MCF 10A (cell line): ENCODE measurements at regions of chr6 and their contacts with region 1.

Region 1: DNA sequence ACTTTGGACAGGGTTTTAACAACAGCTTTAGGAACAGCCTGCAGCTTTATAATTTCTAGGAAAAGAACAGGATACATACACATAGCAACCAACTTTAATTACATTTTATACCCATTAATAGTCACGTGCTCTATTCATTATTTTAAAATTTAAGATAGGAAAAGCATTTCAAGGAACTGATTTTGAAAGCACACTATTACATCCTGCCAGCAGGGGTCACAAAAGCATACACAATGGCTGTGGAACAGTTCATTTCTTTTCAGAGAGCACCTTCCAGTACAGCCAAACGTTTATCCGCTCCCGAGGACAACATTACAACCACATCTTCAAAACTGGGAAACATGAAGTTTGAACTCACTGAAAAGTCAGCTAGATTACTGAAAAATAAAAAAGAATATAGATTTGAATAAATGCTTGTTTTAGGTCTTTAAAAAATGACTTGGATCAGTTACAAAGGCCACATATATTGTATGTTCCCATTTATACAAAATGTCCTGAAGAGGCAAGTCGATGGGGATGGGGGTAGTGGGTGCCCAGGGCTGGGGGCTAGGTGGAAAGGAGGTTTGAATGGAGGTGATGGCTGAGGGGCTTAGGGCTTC is 104.6 kb upstream of the EXOC2 start:
- DNase-seq: peak; percentile 68
- H3K4me3 Mint-ChIP-seq: no peak overlapping the region
- H3K27ac Mint-ChIP-seq: no peak overlapping the region
- H3K4me1 Mint-ChIP-seq: no peaks in the 10 kb centered on the region
- H3K27me3 Mint-ChIP-seq: peaks cover 40% of the 10 kb centered on the region
- CTCF ChIP-seq: peak; percentile 83

Region 2: GRCh38 chr6:431504-431903 is 366.1 kb before region 1 on chr6:
- CTCF ChIA-PET with region 1: no interaction called
- POLR2A ChIA-PET with region 1: no interaction called
- intact Hi-C with region 1: no loop called
- DNase-seq: no peak
- H3K4me3 Mint-ChIP-seq: no peak overlapping the region
- H3K27ac Mint-ChIP-seq: no peak overlapping the region
- H3K4me1 Mint-ChIP-seq: no peaks in the 10 kb centered on the region
- H3K27me3 Mint-ChIP-seq: no peaks in the 10 kb centered on the region
- CTCF ChIP-seq: no peak

Region 3: DNA sequence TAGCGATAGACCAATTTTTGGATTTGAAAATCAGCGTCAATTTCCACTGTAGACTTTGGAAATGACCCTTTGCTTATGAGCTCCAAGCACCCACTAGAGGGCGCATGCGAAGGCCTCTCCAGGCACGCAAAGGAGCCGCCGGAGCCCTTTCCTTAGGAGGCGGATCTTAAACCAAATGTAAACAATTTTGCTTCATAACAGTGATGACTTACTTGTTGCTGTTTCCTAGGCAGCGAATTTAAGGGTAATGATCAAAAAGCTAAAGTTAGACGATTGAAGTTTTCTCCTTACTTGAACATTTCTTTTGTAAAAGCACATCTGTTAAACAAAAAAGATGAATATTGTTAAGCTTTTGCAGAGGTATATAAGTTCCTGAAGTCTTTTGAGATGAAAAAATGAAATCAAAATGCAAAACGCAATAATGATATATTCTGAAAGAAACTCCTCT is 75.5 kb before region 1 on chr6:
- CTCF ChIA-PET with region 1: interaction called, 5 read pairs
- POLR2A ChIA-PET with region 1: no interaction called
- intact Hi-C with region 1: loop called (anchors 10 kb)
- DNase-seq: peak; percentile 87
- H3K4me3 Mint-ChIP-seq: no peak overlapping the region
- H3K27ac Mint-ChIP-seq: no peak overlapping the region
- H3K4me1 Mint-ChIP-seq: no peaks in the 10 kb centered on the region
- H3K27me3 Mint-ChIP-seq: peaks cover 12% of the 10 kb centered on the region
- CTCF ChIP-seq: peak; percentile 74

Region 4: GRCh38 chr6:894274-894673 is 96.7 kb after region 1 on chr6:
- CTCF ChIA-PET with region 1: interaction called, 5 read pairs
- POLR2A ChIA-PET with region 1: no interaction called
- intact Hi-C with region 1: loop called (anchors 5 kb)
- DNase-seq: peak; percentile 13
- H3K4me3 Mint-ChIP-seq: no peak overlapping the region
- H3K27ac Mint-ChIP-seq: no peak overlapping the region
- H3K4me1 Mint-ChIP-seq: no peaks in the 10 kb centered on the region
- H3K27me3 Mint-ChIP-seq: peaks cover 11% of the 10 kb centered on the region
- CTCF ChIP-seq: peak; percentile 18

Region 5: GRCh38 chr6:912871-913835 is 115.6 kb after region 1 on chr6:
- CTCF ChIA-PET with region 1: interaction called, 10 read pairs
- POLR2A ChIA-PET with region 1: interaction called, 6 read pairs
- intact Hi-C with region 1: loop called (anchors 2 kb)
- DNase-seq: peak; percentile 48
- H3K4me3 Mint-ChIP-seq: no peak overlapping the region
- H3K27ac Mint-ChIP-seq: no peak overlapping the region
- H3K4me1 Mint-ChIP-seq: no peaks in the 10 kb centered on the region
- H3K27me3 Mint-ChIP-seq: peaks cover 12% of the 10 kb centered on the region
- CTCF ChIP-seq: peak; percentile 77

Region 6: GRCh38 chr6:1381481-1382330 is 584.1 kb after region 1 on chr6:
- CTCF ChIA-PET with region 1: interaction called, 9 read pairs
- POLR2A ChIA-PET with region 1: interaction called, 3 read pairs
- intact Hi-C with region 1: loop called (anchors 1 kb)
- DNase-seq: peak; percentile 50
- H3K4me3 Mint-ChIP-seq: peak overlapping the region; percentile 18
- H3K27ac Mint-ChIP-seq: no peak overlapping the region
- H3K4me1 Mint-ChIP-seq: peaks cover 8% of the 10 kb centered on the region
- H3K27me3 Mint-ChIP-seq: peaks cover 27% of the 10 kb centered on the region
- CTCF ChIP-seq: peak; percentile 92

Region 7: GRCh38 chr6:1761477-1761877 is 963.9 kb after region 1 on chr6:
- CTCF ChIA-PET with region 1: no interaction called
- POLR2A ChIA-PET with region 1: no interaction called
- intact Hi-C with region 1: no loop called
- DNase-seq: no peak
- H3K4me3 Mint-ChIP-seq: no peak overlapping the region
- H3K27ac Mint-ChIP-seq: no peak overlapping the region
- H3K4me1 Mint-ChIP-seq: peaks cover 16% of the 10 kb centered on the region
- H3K27me3 Mint-ChIP-seq: no peaks in the 10 kb centered on the region
- CTCF ChIP-seq: no peak